ENCODE measurements at regions of chr3 and their contacts with region 1.

Region 1: DNA sequence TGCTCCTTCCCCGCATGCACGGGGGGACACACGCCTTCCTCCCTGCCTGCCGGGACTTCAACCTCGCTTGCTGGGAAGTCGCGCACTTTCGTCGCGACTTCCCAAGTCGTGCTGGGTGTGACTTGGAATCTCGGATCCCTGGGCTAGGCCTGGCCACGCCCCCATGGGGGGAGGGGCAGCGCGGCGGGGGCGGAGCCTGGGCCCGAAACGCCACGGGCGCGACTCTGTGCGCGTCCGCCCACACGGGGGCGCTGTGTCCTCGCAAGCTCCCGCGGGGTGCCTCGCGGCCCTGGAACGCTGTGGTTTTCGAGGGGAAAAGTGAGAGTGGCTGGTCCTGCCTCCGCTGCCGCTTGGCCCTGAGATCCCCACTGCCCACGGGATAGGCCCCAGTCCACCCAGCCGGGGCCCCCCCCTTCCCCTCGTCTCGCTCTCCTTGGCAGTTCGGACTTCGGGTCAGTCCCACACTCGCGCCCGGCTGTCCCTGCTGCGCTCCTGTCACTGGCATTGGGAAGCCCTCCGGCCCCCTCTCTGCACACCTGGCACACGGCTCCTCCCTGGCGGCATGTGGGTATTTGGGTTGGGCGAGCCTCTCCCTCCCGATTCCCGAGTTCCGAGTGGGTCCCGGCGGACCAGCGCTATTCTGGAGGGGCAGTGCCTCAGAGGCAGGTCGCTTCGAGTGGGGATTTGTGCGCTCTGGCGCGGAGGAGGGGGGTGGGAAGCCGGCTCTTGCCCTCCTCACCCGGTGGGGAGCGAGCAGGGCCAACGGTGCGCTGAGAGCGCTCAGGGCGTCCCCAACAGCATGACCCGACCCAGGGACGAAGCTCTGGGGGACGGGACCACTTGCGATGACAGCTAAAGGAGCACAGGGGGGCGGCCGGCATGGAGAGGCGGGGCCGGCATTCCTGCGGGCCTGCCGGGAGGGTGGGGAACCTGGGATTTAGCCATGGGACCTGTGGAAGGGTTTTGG is 23.6 kb downstream of the SEC61A1 start:
- DNase-seq: peak; percentile 74 to 93 (median 83)
- ATAC-seq: peak; percentile 89
- H3K4me3 ChIP-seq: peak overlapping the region; percentile 66
- H3K4me3 Mint-ChIP-seq: peak overlapping the region; percentile 77
- H3K27ac ChIP-seq: no peak overlapping the region
- H3K27ac Mint-ChIP-seq: no peak overlapping the region
- H3K4me1 ChIP-seq: peaks cover 23% of the 10 kb centered on the region
- H3K4me1 Mint-ChIP-seq: peaks cover 5% of the 10 kb centered on the region
- H3K27me3 ChIP-seq: peaks cover 8 to 10% of the 10 kb centered on the region in 2 experiments
- H3K27me3 Mint-ChIP-seq: no peaks in the 10 kb centered on the region
- CTCF ChIP-seq: peak; percentile 87

Region 2: GRCh38 chr3:128123538-128124368 is 48.0 kb after region 1 on chr3 and contains the start of gene RUVBL1:
- CTCF ChIA-PET with region 1: interaction called, 11 read pairs
- POLR2A ChIA-PET with region 1: interaction called, 6 read pairs
- intact Hi-C with region 1: loop called in 1 of 2 experiments (anchors 2 kb)
- DNase-seq: peak; percentile 91 to 99 (median 95)
- ATAC-seq: peak; percentile 93
- H3K4me3 ChIP-seq: peak within 1 kb of the TSS; percentile 98
- H3K4me3 Mint-ChIP-seq: peak within 1 kb of the TSS; percentile 95
- H3K27ac ChIP-seq: peak within 1 kb of the TSS; percentile 67 to 84
- H3K27ac Mint-ChIP-seq: peak within 1 kb of the TSS; percentile 93
- H3K4me1 ChIP-seq: peaks cover 21% of the 10 kb centered on the region
- H3K4me1 Mint-ChIP-seq: peaks cover 28% of the 10 kb centered on the region
- H3K27me3 ChIP-seq: no peaks in the 10 kb centered on the region
- H3K27me3 Mint-ChIP-seq: no peaks in the 10 kb centered on the region
- CTCF ChIP-seq: no peak
- total RNA-seq, gene RUVBL1: 5.6 to 7.7 TPM

Region 3: DNA sequence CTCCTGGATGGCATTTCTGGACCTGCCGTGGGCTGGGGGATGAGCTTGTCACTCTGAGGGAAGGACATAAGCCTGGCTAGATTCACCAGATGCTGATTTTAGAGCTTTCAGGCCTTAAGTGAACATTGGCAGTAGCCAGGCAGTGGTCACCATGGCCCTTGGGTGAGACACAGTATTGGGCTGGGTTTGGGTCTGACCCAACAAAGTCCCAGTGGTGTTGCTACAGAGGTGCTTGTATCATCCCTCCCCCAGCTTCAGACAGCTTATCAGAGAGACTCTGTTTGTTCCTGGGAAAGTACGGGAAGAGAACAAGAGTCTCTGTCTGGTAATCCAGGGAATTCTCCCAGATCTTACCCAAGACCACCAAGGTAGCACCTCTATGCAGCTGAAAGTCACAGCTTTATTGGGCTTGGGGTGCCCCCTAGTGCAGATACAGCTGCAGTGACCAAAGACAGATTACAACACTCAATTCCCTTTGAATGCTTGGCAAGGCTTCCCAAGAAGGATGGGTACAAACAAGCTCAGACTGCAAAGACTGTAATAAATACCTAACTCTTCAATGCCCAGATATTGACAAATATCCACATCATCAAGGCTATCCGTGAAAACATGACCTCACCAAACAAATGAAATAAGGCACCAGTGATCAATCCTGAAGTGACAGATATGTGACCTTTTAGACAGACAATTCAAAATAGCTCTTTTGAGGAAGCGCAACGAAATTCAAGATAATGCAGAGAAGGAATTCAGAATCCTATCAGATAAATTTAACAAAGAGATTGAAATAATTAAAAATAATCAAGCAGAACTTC is 57.7 kb after region 1 on chr3:
- CTCF ChIA-PET with region 1: interaction called, 11 read pairs
- POLR2A ChIA-PET with region 1: interaction called, 3 read pairs
- intact Hi-C with region 1: loop called in 1 of 2 experiments (anchors 5 kb)
- DNase-seq: peak in 13 of 14 experiments; percentile 23 to 70 (median 41)
- ATAC-seq: peak; percentile 78
- H3K4me3 ChIP-seq: no peak overlapping the region
- H3K4me3 Mint-ChIP-seq: no peak overlapping the region
- H3K27ac ChIP-seq: no peak overlapping the region
- H3K27ac Mint-ChIP-seq: no peak overlapping the region
- H3K4me1 ChIP-seq: no peaks in the 10 kb centered on the region
- H3K4me1 Mint-ChIP-seq: no peaks in the 10 kb centered on the region
- H3K27me3 ChIP-seq: no peaks in the 10 kb centered on the region
- H3K27me3 Mint-ChIP-seq: peaks cover 4% of the 10 kb centered on the region
- CTCF ChIP-seq: peak; percentile 66

Region 4: DNA sequence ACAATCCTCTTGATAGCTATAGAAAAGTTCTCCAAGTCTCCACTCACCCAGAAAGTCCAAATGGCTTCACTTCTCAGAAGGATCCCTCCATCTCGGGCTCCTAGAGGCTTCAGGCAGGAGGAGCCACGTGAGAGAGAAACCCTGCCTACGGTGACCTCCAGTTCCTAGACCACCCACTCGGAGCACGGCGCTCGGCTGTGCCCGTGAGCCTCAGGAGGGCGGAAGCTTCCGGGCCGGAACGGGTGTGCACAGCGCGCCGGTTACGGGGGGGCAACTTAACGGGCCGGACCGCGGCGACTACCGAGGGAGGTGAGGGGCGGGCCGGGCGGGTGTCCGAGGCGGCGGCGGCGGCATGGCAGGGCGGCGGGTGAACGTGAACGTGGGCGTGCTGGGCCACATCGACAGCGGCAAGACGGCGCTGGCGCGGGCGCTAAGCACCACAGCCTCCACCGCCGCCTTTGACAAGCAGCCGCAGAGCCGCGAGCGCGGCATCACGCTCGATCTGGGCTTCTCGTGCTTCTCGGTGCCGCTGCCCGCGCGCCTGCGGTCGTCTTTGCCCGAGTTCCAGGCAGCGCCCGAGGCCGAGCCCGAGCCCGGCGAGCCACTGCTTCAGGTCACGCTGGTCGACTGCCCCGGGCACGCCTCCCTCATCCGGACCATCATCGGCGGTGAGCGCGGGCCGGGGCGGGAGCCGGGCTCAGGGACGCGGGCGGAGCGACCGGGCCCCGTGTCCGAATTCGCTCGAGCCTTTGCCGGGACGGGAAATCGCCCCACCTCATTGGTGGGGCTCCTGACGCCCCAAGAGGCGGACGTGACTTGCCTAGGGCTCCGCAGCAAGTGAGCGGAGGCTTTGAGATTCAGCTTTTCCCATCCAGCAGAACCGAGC is 77.6 kb after region 1 on chr3 and contains the start of gene EEFSEC:
- CTCF ChIA-PET with region 1: interaction called, 10 read pairs
- POLR2A ChIA-PET with region 1: no interaction called
- intact Hi-C with region 1: no loop called
- DNase-seq: peak; percentile 72 to 90 (median 82)
- ATAC-seq: peak; percentile 87
- H3K4me3 ChIP-seq: peak within 1 kb of the TSS; percentile 58
- H3K4me3 Mint-ChIP-seq: peak within 1 kb of the TSS; percentile 87
- H3K27ac ChIP-seq: peak within 1 kb of the TSS; percentile 56 to 80
- H3K27ac Mint-ChIP-seq: peak within 1 kb of the TSS; percentile 84
- H3K4me1 ChIP-seq: peaks cover 22% of the 10 kb centered on the region
- H3K4me1 Mint-ChIP-seq: peaks cover 40% of the 10 kb centered on the region
- H3K27me3 ChIP-seq: no peaks in the 10 kb centered on the region
- H3K27me3 Mint-ChIP-seq: no peaks in the 10 kb centered on the region
- CTCF ChIP-seq: no peak
- total RNA-seq, gene EEFSEC: 13.1 to 13.9 TPM

Region 5: GRCh38 chr3:128607710-128608048 is 531.9 kb after region 1 on chr3:
- CTCF ChIA-PET with region 1: no interaction called
- POLR2A ChIA-PET with region 1: no interaction called
- intact Hi-C with region 1: loop called in 1 of 2 experiments (anchors 5 kb)
- DNase-seq: no peak
- ATAC-seq: no peak
- H3K4me3 ChIP-seq: peak overlapping the region; percentile 62
- H3K4me3 Mint-ChIP-seq: no peak overlapping the region
- H3K27ac ChIP-seq: no peak overlapping the region
- H3K27ac Mint-ChIP-seq: no peak overlapping the region
- H3K4me1 ChIP-seq: peaks cover 12% of the 10 kb centered on the region
- H3K4me1 Mint-ChIP-seq: no peaks in the 10 kb centered on the region
- H3K27me3 ChIP-seq: peaks cover 5 to 10% of the 10 kb centered on the region in 2 experiments
- H3K27me3 Mint-ChIP-seq: no peaks in the 10 kb centered on the region
- CTCF ChIP-seq: no peak

Measured in CD4-positive, alpha-beta T cell (primary cell).